ENCODE measurements at regions of chr7 and their contacts with region 1.

Region 1: GRCh38 chr7:28768628-28769027 is 189.5 kb downstream of the TRIL start:
- DNase-seq: no peak
- ATAC-seq: no peak
- H3K4me3 ChIP-seq: no peak overlapping the region
- H3K27ac ChIP-seq: no peak overlapping the region
- H3K4me1 ChIP-seq: no peaks in the 10 kb centered on the region
- H3K27me3 ChIP-seq: no peaks in the 10 kb centered on the region
- CTCF ChIP-seq: no peak
- EP300 ChIP-seq: no peak
- POLR2A ChIP-seq: no peak
- RAD21 ChIP-seq: no peak

Region 2: GRCh38 chr7:28419717-28420116 is 348.9 kb before region 1 on chr7:
- CTCF ChIA-PET with region 1: no interaction called
- POLR2A ChIA-PET with region 1: interaction called, 10 read pairs
- RAD21 ChIA-PET with region 1: no interaction called
- SMC1A ChIA-PET with region 1: no interaction called
- in situ Hi-C with region 1: no loop called
- intact Hi-C with region 1: no loop called
- DNase-seq: no peak
- ATAC-seq: no peak
- H3K4me3 ChIP-seq: no peak overlapping the region
- H3K27ac ChIP-seq: no peak overlapping the region
- H3K4me1 ChIP-seq: no peaks in the 10 kb centered on the region
- H3K27me3 ChIP-seq: no peaks in the 10 kb centered on the region
- CTCF ChIP-seq: no peak
- EP300 ChIP-seq: no peak
- POLR2A ChIP-seq: no peak
- RAD21 ChIP-seq: no peak